Heart left ventricle (tissue), 16 donors: ENCODE measurements at regions of chr5 and their contacts with region 1.

Region 1: DNA sequence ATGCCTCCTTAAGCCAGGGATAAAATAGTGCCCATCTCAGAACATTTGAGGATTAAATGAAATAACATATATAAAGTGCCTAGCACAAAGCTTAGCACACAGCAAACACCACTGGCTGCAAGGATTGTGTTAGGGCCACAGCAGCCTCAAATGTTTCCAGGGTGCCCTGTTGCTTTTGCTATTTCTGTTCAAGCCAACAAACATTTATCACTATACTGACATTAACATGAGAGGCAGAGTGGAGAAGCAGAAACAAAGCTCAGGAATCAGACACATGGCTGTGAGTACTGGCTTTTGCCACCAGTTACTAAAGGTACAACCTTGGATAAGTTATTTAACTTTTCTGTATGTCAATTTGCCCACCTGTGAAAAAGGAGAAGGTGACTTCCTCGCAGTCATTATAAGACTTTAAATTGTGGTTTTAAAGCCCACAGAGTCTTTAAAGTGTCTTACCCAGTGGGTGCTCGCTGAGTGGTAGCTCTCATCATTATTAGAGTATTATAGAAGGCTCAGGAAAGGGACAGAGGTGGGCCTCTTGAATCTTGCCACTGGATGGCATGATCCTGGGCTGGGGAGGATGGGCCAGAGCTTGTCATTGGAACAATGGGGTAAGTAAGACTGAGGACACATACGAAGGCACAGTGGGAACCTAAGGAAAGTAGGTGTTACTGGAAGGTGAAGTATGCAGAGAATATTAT is 98.2 kb downstream of the MARCHF3 start:
- DNase-seq: no peak
- ATAC-seq: peak; percentile 22 to 68 (median 68)
- H3K4me3 ChIP-seq: no peak overlapping the region
- H3K27ac ChIP-seq: peak overlapping the region in 5 of 12 donors; percentile 3 to 33 (median 24)
- H3K4me1 ChIP-seq: peaks cover 0 to 28% (median 7%) of the 10 kb centered on the region in 12 donors
- H3K27me3 ChIP-seq: no peaks in the 10 kb centered on the region
- CTCF ChIP-seq: no peak
- POLR2A ChIP-seq: no peak

Region 2: DNA sequence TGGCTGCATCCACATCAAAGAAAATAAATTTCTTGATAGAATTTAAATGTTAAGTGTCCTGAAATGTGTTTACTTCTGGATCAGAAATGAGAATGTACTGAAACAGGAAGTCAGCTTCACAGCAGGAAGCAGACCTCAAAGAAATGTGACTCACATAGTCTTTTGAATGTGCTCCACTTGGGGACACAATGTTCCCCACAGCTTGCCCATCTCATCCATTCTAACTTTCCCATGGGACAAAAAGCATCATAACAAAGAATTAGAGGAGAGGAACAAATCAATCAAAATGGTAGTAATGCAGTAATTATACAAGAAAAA is 423.2 kb before region 1 on chr5:
- intact Hi-C with region 1: no loop called
- DNase-seq: no peak
- ATAC-seq: peak; percentile 47 to 86 (median 66)
- H3K4me3 ChIP-seq: peak overlapping the region in 1 of 12 donors; percentile 22
- H3K27ac ChIP-seq: peak overlapping the region in 11 of 12 donors; percentile 0 to 87 (median 57)
- H3K4me1 ChIP-seq: peaks cover 0 to 36% (median 12%) of the 10 kb centered on the region in 12 donors
- H3K27me3 ChIP-seq: no peaks in the 10 kb centered on the region
- CTCF ChIP-seq: no peak
- POLR2A ChIP-seq: no peak

Region 3: GRCh38 chr5:126998201-126998631 is 66.1 kb after region 1 on chr5:
- intact Hi-C with region 1: loop called in 1 of 10 experiments (anchors 5 kb)
- DNase-seq: peak in 1 of 5 donors; percentile 27
- ATAC-seq: peak in 3 of 4 donors; percentile 24 to 46 (median 43)
- H3K4me3 ChIP-seq: no peak overlapping the region
- H3K27ac ChIP-seq: peak overlapping the region in 6 of 12 donors; percentile 1 to 45 (median 15)
- H3K4me1 ChIP-seq: peaks cover 0 to 62% (median 40%) of the 10 kb centered on the region in 12 donors
- H3K27me3 ChIP-seq: no peaks in the 10 kb centered on the region
- CTCF ChIP-seq: no peak
- POLR2A ChIP-seq: no peak

Region 4: DNA sequence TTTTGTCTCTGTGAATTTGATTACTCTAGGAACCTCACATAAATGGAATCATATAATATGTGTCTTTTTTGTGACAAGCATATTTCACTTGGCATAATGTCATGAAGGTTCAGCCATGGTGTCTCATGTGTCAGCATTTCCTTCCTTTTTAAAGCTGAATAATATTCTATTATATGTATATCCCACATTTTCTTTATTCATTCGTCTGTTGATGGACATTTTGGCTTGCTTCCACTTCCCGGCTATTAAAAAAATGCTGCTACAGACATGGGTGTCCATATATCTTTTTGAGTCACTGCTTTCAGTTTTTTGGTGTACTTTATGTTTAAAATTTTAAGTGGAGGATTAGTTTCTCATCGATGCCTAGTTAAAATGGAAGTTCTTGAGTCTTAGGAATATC is 201.0 kb after region 1 on chr5:
- intact Hi-C with region 1: no loop called
- DNase-seq: no peak
- ATAC-seq: no peak
- H3K4me3 ChIP-seq: no peak overlapping the region
- H3K27ac ChIP-seq: no peak overlapping the region
- H3K4me1 ChIP-seq: no peaks in the 10 kb centered on the region
- H3K27me3 ChIP-seq: no peaks in the 10 kb centered on the region
- CTCF ChIP-seq: no peak
- POLR2A ChIP-seq: no peak